PC-3 (cell line): ENCODE measurements at regions of chr22 and their contacts with region 1.

Region 1: GRCh38 chr22:38030311-38031133 is 26.7 kb upstream of the PICK1 start:
- DNase-seq: no peak
- ATAC-seq: no peak
- H3K4me3 ChIP-seq: no peak overlapping the region
- H3K27ac ChIP-seq: no peak overlapping the region
- H3K4me1 ChIP-seq: peaks cover 14% of the 10 kb centered on the region
- H3K27me3 ChIP-seq: no peaks in the 10 kb centered on the region
- CTCF ChIP-seq: no peak

Region 2: DNA sequence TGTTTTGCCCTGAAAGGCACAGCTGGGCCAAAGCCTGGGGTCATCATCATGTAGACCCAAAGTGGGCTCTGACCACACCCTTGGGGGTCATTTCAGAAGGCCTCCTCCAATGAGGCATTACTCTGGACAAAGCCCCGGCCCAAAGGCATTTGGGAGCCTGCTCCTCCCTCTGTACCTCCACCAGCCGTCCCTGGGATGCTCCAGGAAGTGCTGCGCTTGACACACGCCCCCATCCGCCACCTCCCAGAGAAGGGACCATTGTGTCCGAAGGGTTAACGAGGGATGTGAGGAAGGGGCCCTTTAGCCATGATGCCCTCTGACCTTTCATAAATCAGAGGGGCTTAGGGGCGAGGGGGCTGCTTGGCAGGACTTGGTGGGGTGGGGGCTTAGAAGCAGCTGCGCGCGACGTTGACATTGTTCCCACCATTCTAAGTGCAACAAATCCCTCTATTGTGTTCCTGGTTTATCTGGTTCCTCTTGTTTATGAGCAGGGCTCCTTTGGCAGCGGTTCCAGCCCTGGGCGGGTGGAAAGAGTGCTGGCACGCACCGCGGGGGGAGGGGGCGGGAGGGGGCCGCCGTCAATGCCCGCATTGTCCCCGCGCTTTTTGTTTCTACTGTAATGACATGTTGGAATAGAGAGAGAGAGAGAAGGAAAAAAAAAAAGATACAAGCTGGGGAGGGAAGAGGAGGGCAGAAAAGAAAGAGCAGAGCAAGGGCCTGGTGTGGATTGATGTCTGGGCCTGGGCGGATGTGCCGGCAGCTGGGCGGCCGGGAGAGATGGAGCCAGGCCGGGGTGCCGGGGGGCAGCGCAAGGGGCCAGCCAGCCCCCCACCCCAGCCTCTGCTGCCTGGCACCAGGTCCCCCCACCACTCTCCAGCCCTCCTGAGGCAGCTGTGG is 14.1 kb before region 1 on chr22:
- CTCF ChIA-PET with region 1: no interaction called
- POLR2A ChIA-PET with region 1: no interaction called
- intact Hi-C with region 1: loop called (anchors 2 kb)
- DNase-seq: peak; percentile 66
- ATAC-seq: no peak
- H3K4me3 ChIP-seq: no peak overlapping the region
- H3K27ac ChIP-seq: 0 out of 2 replicates have a peak overlapping the region, but pooled peaks have one; percentile 25
- H3K4me1 ChIP-seq: peaks cover 10% of the 10 kb centered on the region
- H3K27me3 ChIP-seq: no peaks in the 10 kb centered on the region
- CTCF ChIP-seq: no peak